CD14-positive monocyte (primary cell): ENCODE measurements at regions of chr1 and their contacts with region 1.

Region 1: DNA sequence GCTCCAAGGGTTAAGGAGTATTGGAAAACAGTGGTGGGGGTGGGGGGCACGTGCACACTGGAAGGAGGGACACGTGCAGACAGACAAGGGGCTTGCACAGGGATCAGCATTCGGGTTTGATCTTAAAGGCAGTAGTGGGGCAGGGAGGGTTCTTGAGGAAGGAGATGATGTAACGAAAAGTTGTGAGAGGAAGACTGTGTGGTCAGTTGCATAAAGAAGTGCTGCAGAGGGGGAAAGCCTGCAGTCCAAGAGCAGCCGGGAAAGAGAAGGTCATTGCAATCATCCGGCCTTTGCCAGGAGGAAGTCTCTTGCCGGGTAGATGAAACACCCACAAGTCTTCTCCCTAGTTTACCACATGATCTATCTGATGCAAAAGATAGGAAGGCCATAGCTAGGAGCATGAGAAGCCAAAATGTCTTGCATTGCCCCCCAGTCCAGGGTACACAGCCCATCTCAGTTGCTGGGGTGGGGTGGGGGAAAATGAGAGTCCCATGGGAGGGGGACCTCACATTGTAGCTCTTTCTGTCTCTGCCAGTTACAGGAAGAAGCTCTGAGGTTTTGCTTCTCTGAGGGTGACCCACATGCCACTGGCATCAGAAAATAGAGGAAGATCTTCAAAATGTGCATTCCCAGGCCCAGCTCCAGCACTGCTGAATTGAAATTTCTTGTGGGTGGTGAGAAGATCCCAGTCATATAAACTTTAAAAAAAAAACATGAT is 202.5 kb upstream of the RAB4A start:
- DNase-seq: peak; percentile 87 to 96 (median 92)
- H3K4me3 ChIP-seq: peak overlapping the region in 1 of 3 experiments; percentile 48
- H3K4me3 Mint-ChIP-seq: peak overlapping the region; percentile 47 to 67
- H3K27ac ChIP-seq: peak overlapping the region; percentile 76 to 82
- H3K27ac Mint-ChIP-seq: peak overlapping the region; percentile 91 to 96 (median 94)
- H3K4me1 ChIP-seq: peaks cover 78 to 88% of the 10 kb centered on the region in 2 donors
- H3K4me1 Mint-ChIP-seq: peaks cover 88% of the 10 kb centered on the region
- H3K27me3 ChIP-seq: no peaks in the 10 kb centered on the region
- H3K27me3 Mint-ChIP-seq: peaks cover 0 to 2% (median 0%) of the 10 kb centered on the region in 3 donors
- CTCF ChIP-seq: no peak

Region 2: GRCh38 chr1:227849251-227849650 is 1219.2 kb before region 1 on chr1:
- intact Hi-C with region 1: no loop called
- DNase-seq: no peak
- H3K4me3 ChIP-seq: no peak overlapping the region
- H3K4me3 Mint-ChIP-seq: no peak overlapping the region
- H3K27ac ChIP-seq: no peak overlapping the region
- H3K27ac Mint-ChIP-seq: no peak overlapping the region
- H3K4me1 ChIP-seq: no peaks in the 10 kb centered on the region
- H3K4me1 Mint-ChIP-seq: no peaks in the 10 kb centered on the region
- H3K27me3 ChIP-seq: no peaks in the 10 kb centered on the region
- H3K27me3 Mint-ChIP-seq: peaks cover 0 to 2% (median 1%) of the 10 kb centered on the region in 3 donors
- CTCF ChIP-seq: no peak

Region 3: GRCh38 chr1:228860911-228861831 is 207.3 kb before region 1 on chr1:
- intact Hi-C with region 1: no loop called
- DNase-seq: no peak
- H3K4me3 ChIP-seq: peak overlapping the region in 1 of 3 experiments; percentile 3
- H3K4me3 Mint-ChIP-seq: peak overlapping the region; percentile 49 to 62
- H3K27ac ChIP-seq: no peak overlapping the region
- H3K27ac Mint-ChIP-seq: peak overlapping the region in 1 of 7 donors; percentile 40
- H3K4me1 ChIP-seq: peaks cover 32 to 41% of the 10 kb centered on the region in 2 donors
- H3K4me1 Mint-ChIP-seq: peaks cover 37% of the 10 kb centered on the region
- H3K27me3 ChIP-seq: no peaks in the 10 kb centered on the region
- H3K27me3 Mint-ChIP-seq: peaks cover 0 to 6% (median 2%) of the 10 kb centered on the region in 3 donors
- CTCF ChIP-seq: no peak

Region 4: GRCh38 chr1:229015806-229016205 is 52.6 kb before region 1 on chr1:
- intact Hi-C with region 1: no loop called
- DNase-seq: no peak
- H3K4me3 ChIP-seq: no peak overlapping the region
- H3K4me3 Mint-ChIP-seq: no peak overlapping the region
- H3K27ac ChIP-seq: no peak overlapping the region
- H3K27ac Mint-ChIP-seq: peak overlapping the region in 1 of 7 donors; percentile 40
- H3K4me1 ChIP-seq: peaks cover 16 to 21% of the 10 kb centered on the region in 2 donors
- H3K4me1 Mint-ChIP-seq: peaks cover 28% of the 10 kb centered on the region
- H3K27me3 ChIP-seq: no peaks in the 10 kb centered on the region
- H3K27me3 Mint-ChIP-seq: peaks cover 0 to 2% (median 2%) of the 10 kb centered on the region in 3 donors
- CTCF ChIP-seq: no peak

Region 5: GRCh38 chr1:229130028-229130668 is 61.7 kb after region 1 on chr1:
- intact Hi-C with region 1: loop called in 1 of 2 experiments (anchors 5 kb)
- DNase-seq: peak; percentile 76 to 92 (median 88)
- H3K4me3 ChIP-seq: peak overlapping the region in 1 of 3 experiments; percentile 38
- H3K4me3 Mint-ChIP-seq: peak overlapping the region; percentile 60 to 84
- H3K27ac ChIP-seq: peak overlapping the region; percentile 54 to 79
- H3K27ac Mint-ChIP-seq: peak overlapping the region; percentile 84 to 98 (median 96)
- H3K4me1 ChIP-seq: peaks cover 73 to 74% of the 10 kb centered on the region in 2 donors
- H3K4me1 Mint-ChIP-seq: peaks cover 69% of the 10 kb centered on the region
- H3K27me3 ChIP-seq: no peaks in the 10 kb centered on the region
- H3K27me3 Mint-ChIP-seq: peaks cover 0 to 12% (median 3%) of the 10 kb centered on the region in 3 donors
- CTCF ChIP-seq: no peak